Naive thymus-derived CD4-positive, alpha-beta T cell (primary cell): ENCODE measurements at regions of chrX and their contacts with region 1.

Region 1: DNA sequence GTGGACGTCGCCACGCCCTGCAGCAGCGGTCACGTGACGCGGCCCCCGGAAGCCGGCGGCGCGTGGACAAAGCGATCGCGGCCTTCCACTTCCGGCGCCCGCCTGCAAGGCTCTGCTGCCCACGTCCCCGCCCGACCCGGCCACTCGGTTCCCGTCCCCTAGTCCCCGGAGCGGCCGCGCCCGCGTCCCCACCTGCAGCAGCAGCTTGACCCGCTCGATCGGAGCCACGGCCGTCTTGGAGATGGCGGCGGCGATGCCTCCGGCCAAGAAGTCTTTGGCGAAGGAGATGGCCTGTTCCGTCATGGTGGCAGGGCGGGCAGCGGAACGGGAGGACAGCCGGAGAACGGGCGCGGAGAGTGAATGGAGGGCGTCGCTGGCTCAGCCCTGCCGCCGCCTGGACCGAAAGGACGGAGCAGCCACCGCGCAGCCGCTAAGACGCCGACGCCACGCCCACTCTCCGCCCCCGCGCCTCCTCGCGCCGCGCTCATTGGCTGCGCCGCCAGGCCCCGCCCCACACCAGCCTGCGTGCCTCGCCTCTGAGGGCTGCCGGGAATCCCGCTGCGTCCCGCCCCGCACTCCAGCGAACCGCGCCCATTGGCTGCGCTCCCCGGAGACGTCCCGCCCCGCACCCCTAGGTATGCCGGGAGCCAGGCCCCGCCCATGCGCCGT is at the start of gene SLC25A6:
- DNase-seq: peak; percentile 97 to 100 (median 100)
- ATAC-seq: peak; percentile 96
- H3K4me3 ChIP-seq: peak within 1 kb of the TSS; percentile 94
- H3K4me3 Mint-ChIP-seq: peak within 1 kb of the TSS; percentile 78 to 95 (median 92)
- H3K27ac ChIP-seq: peak within 1 kb of the TSS; percentile 97
- H3K27ac Mint-ChIP-seq: peak within 1 kb of the TSS; percentile 84 to 98 (median 91)
- H3K4me1 ChIP-seq: peaks cover 25 to 33% of the 10 kb centered on the region in 2 donors
- H3K4me1 Mint-ChIP-seq: peaks cover 35 to 71% (median 52%) of the 10 kb centered on the region in 7 donors
- H3K27me3 ChIP-seq: no peaks in the 10 kb centered on the region
- H3K27me3 Mint-ChIP-seq: no peaks in the 10 kb centered on the region
- total RNA-seq, gene SLC25A6: 238 to 341 (median 270) TPM

Region 2: DNA sequence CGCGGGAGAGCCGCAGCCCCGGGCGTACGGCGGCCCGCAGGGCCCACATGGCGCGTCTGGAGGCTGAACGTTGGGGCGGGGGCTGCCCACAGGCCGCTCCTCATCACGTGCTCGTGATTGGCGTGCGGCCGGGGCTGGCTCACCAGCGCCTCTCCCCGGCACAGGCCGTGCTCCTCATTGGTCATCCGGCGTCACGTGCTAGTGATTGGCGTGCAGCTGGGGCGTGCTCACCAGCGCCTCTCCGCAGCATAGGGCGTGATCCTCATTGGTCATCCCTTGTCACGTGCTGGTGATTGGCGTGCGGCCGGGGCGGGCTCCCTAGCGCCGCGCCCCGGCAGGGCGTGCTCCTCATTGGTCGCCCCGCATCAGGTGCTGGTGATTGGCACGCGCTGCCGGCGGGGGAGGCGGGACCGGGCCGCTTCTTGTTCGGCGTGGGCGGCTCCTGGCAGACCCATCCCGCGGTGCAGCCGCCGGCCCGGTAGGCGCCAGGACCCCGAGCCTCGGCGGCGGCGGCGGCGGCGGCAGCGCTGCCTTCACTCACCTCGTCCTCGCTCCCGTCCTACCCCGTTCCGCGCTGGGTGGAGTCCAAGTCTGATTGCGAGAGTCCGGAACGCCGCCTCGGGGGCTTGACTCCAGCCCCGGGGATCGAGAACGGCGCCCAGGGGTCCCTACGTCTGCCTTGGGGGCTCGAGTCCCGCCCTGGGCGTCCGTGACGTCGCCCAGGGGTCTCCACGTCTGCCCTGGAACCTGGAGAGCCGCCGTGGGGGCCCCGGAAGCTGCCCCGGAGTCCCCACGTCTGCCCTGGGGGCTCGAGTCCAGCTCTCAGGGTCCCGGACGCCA is 1072.9 kb before region 1 on chrX and contains the start of gene GTPBP6:
- CTCF ChIA-PET with region 1: no interaction called
- POLR2A ChIA-PET with region 1: no interaction called
- intact Hi-C with region 1: loop called (anchors 1 to 5 kb)
- DNase-seq: peak; percentile 93 to 100 (median 99)
- ATAC-seq: peak; percentile 80
- H3K4me3 ChIP-seq: peak within 1 kb of the TSS; percentile 70
- H3K4me3 Mint-ChIP-seq: peak within 1 kb of the TSS in 9 of 10 donors; percentile 85 to 98 (median 92)
- H3K27ac ChIP-seq: peak within 1 kb of the TSS; percentile 95
- H3K27ac Mint-ChIP-seq: peak within 1 kb of the TSS; percentile 93 to 100 (median 98)
- H3K4me1 ChIP-seq: peaks cover 15 to 16% of the 10 kb centered on the region in 2 donors
- H3K4me1 Mint-ChIP-seq: peaks cover 8 to 34% (median 25%) of the 10 kb centered on the region in 7 donors
- H3K27me3 ChIP-seq: no peaks in the 10 kb centered on the region
- H3K27me3 Mint-ChIP-seq: peaks cover 0 to 3% (median 0%) of the 10 kb centered on the region in 5 donors
- total RNA-seq, gene GTPBP6: 52.1 to 95.2 (median 75.1) TPM

Region 3: DNA sequence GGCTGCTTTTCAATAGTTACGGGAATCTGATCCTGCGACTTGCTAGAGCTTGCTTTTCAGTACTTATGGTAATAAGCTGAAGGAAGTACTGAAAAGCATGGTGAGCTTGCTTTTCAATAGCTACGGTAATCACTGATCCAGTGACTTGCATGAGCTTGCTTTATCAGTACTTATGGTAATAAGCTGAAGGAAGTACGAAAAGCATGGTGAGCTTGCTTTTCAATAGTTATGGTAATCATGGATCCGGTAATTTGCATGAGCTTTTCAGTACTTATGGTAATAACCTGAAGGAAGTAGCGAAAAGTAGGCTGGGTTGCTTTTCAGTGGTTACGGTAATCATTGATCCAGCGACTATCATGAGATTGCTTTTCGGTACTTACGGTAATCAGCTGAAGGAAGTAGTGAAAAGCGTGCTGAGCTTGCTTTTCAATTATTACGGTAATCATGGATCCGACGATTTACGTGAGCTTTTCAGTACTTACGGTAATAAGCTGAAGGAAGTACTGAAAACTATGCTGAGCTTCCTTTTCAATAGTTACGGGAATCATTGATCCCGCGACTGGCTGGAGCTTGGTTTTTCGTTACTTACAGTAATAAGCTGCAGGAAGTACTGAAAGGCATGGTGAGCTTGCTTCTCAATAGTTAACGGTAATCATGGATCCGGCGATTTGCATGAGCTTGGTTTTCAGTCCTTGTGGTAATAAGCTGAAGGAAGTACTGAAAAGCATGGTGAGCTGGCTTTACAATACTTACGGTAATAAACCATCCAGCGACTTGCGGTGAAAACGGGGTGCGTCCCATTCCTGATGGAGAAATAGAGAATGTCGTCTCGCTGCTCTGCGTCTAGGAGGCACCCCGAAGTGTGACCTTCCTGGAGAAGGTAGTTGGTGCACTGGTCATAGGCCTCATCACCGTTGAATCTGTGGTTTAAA is 185.9 kb before region 1 on chrX:
- CTCF ChIA-PET with region 1: no interaction called
- POLR2A ChIA-PET with region 1: no interaction called
- intact Hi-C with region 1: loop called (anchors 1 to 5 kb)
- DNase-seq: peak; percentile 14 to 77 (median 69)
- ATAC-seq: peak; percentile 70
- H3K4me3 ChIP-seq: peak overlapping the region; percentile 56
- H3K4me3 Mint-ChIP-seq: peak overlapping the region; percentile 76 to 87 (median 83)
- H3K27ac ChIP-seq: no peak overlapping the region
- H3K27ac Mint-ChIP-seq: peak overlapping the region in 7 of 9 donors; percentile 22 to 68 (median 36)
- H3K4me1 ChIP-seq: peaks cover 6 to 11% of the 10 kb centered on the region in 2 donors
- H3K4me1 Mint-ChIP-seq: peaks cover 15 to 42% (median 32%) of the 10 kb centered on the region in 7 donors
- H3K27me3 ChIP-seq: no peaks in the 10 kb centered on the region
- H3K27me3 Mint-ChIP-seq: no peaks in the 10 kb centered on the region

Region 4: DNA sequence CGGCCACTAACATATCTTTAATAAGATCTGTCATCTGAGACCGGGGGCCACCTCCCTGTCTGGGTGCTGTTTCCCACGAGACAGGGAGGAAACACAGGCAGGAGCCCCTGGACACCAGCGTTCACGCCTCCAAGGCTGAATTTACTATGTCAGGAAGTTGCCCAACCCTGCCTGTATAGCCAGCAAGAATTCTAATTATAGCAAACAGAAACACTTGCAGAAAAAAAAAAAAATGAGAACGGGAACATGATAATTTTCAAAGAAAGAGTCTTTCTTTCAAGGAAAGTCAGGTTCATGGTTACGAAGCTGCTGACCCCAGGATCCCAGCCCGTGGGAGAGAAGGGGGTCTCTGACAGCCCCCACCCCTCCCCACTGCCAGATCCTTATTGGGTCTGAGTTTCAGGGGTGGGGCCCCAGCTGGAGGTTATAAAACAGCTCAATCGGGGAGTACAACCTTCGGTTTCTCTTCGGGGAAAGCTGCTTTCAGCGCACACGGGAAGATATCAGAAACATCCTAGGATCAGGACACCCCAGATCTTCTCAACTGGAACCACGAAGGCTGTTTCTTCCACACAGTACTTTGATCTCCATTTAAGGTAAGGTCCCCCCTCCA is 55.4 kb before region 1 on chrX and contains the start of gene IL3RA:
- CTCF ChIA-PET with region 1: no interaction called
- POLR2A ChIA-PET with region 1: no interaction called
- intact Hi-C with region 1: loop called in 1 of 2 experiments (anchors 5 kb)
- DNase-seq: peak in 4 of 9 donors; percentile 7 to 14 (median 12)
- ATAC-seq: peak; percentile 79
- H3K4me3 ChIP-seq: peak within 1 kb of the TSS; percentile 38
- H3K4me3 Mint-ChIP-seq: peak within 1 kb of the TSS; percentile 77 to 97 (median 84)
- H3K27ac ChIP-seq: no peak within 1 kb of the TSS
- H3K27ac Mint-ChIP-seq: peak within 1 kb of the TSS in 8 of 9 donors; percentile 0 to 89 (median 42)
- H3K4me1 ChIP-seq: no peaks in the 10 kb centered on the region
- H3K4me1 Mint-ChIP-seq: peaks cover 6 to 32% (median 9%) of the 10 kb centered on the region in 7 donors
- H3K27me3 ChIP-seq: no peaks in the 10 kb centered on the region
- H3K27me3 Mint-ChIP-seq: peaks cover 0 to 4% (median 3%) of the 10 kb centered on the region in 5 donors
- total RNA-seq, gene IL3RA: 7.9 to 23.7 (median 10.5) TPM in 3 of 5 experiments, not detected in the others

Region 5: DNA sequence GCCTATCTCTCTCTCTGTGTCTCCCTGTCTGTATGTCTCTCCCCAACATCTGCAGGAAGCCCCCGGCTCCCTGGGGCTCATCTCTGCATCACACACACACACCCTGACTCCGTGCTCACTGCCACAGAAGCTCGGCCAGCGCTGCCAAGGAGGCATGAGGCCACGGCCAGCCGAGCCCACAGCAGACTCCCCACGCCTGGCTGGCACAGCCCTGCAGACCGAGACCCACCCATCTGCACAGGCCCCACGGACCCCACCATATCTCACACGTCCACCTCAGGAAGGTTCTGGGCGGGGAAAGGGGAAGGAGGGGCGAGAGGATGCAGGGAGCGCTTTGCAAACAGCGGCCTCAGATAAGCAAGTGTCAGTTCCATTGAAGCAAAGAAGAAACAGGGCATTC is 28.5 kb after region 1 on chrX:
- CTCF ChIA-PET with region 1: no interaction called
- POLR2A ChIA-PET with region 1: no interaction called
- intact Hi-C with region 1: no loop called
- DNase-seq: no peak
- ATAC-seq: no peak
- H3K4me3 ChIP-seq: no peak overlapping the region
- H3K4me3 Mint-ChIP-seq: no peak overlapping the region
- H3K27ac ChIP-seq: no peak overlapping the region
- H3K27ac Mint-ChIP-seq: peak overlapping the region in 5 of 9 donors; percentile 15 to 72 (median 65)
- H3K4me1 ChIP-seq: no peaks in the 10 kb centered on the region
- H3K4me1 Mint-ChIP-seq: peaks cover 0 to 11% (median 8%) of the 10 kb centered on the region in 7 donors
- H3K27me3 ChIP-seq: no peaks in the 10 kb centered on the region
- H3K27me3 Mint-ChIP-seq: no peaks in the 10 kb centered on the region

Region 6: DNA sequence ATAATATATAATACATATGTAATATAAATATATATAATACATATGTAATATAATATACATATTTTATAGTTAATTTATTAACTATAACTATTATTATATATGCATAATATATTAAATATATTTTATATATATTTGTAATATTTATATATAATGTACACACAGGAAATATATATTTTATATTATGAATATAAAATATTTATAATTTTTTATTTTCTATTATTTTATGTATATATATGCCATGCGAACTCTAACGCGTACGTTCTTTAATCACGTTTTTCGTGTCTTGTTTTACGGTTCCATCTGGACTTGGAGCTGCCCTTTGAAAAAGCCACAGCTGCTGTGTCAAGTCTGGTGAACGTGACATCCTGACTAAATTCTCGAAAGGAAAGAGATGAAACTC is 555.1 kb after region 1 on chrX:
- CTCF ChIA-PET with region 1: no interaction called
- POLR2A ChIA-PET with region 1: no interaction called
- intact Hi-C with region 1: no loop called
- DNase-seq: no peak
- ATAC-seq: no peak
- H3K4me3 ChIP-seq: no peak overlapping the region
- H3K4me3 Mint-ChIP-seq: no peak overlapping the region
- H3K27ac ChIP-seq: no peak overlapping the region
- H3K27ac Mint-ChIP-seq: no peak overlapping the region
- H3K4me1 ChIP-seq: no peaks in the 10 kb centered on the region
- H3K4me1 Mint-ChIP-seq: no peaks in the 10 kb centered on the region
- H3K27me3 ChIP-seq: no peaks in the 10 kb centered on the region
- H3K27me3 Mint-ChIP-seq: no peaks in the 10 kb centered on the region

Region 7: GRCh38 chrX:2608638-2609430 is 1217.0 kb after region 1 on chrX:
- CTCF ChIA-PET with region 1: no interaction called
- POLR2A ChIA-PET with region 1: no interaction called
- intact Hi-C with region 1: loop called (anchors 1 kb)
- DNase-seq: peak; percentile 69 to 89 (median 79)
- ATAC-seq: peak; percentile 99
- H3K4me3 ChIP-seq: peak overlapping the region; percentile 89
- H3K4me3 Mint-ChIP-seq: peak overlapping the region; percentile 90 to 96 (median 93)
- H3K27ac ChIP-seq: peak overlapping the region; percentile 71
- H3K27ac Mint-ChIP-seq: peak overlapping the region; percentile 51 to 93 (median 86)
- H3K4me1 ChIP-seq: peaks cover 9 to 17% of the 10 kb centered on the region in 2 donors
- H3K4me1 Mint-ChIP-seq: peaks cover 39 to 72% (median 56%) of the 10 kb centered on the region in 7 donors
- H3K27me3 ChIP-seq: no peaks in the 10 kb centered on the region
- H3K27me3 Mint-ChIP-seq: no peaks in the 10 kb centered on the region

Region 8: DNA sequence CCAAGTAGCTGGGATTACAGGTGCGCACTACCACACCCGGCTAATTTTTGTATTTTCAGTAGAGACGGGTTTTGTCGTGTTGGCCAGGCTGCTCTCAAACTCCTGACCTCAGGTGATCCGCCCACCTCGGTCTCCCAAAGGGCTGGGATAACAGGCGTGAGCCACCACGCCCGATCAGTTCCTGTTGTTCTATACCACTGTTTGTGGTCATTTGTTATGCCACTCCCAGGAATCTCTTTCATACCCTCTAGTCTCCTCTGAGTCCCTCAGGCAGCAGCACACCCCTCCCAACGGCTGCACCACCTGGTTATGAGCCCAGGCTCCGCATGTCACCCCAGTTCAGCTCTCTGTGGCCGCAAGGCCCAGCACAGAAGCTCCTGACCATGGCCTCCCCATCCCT is 1281.8 kb after region 1 on chrX:
- CTCF ChIA-PET with region 1: no interaction called
- POLR2A ChIA-PET with region 1: no interaction called
- intact Hi-C with region 1: no loop called
- DNase-seq: no peak
- ATAC-seq: no peak
- H3K4me3 ChIP-seq: no peak overlapping the region
- H3K4me3 Mint-ChIP-seq: no peak overlapping the region
- H3K27ac ChIP-seq: no peak overlapping the region
- H3K27ac Mint-ChIP-seq: no peak overlapping the region
- H3K4me1 ChIP-seq: no peaks in the 10 kb centered on the region
- H3K4me1 Mint-ChIP-seq: peaks cover 0 to 4% (median 0%) of the 10 kb centered on the region in 7 donors
- H3K27me3 ChIP-seq: no peaks in the 10 kb centered on the region
- H3K27me3 Mint-ChIP-seq: peaks cover 0 to 13% (median 0%) of the 10 kb centered on the region in 5 donors

Region 9: DNA sequence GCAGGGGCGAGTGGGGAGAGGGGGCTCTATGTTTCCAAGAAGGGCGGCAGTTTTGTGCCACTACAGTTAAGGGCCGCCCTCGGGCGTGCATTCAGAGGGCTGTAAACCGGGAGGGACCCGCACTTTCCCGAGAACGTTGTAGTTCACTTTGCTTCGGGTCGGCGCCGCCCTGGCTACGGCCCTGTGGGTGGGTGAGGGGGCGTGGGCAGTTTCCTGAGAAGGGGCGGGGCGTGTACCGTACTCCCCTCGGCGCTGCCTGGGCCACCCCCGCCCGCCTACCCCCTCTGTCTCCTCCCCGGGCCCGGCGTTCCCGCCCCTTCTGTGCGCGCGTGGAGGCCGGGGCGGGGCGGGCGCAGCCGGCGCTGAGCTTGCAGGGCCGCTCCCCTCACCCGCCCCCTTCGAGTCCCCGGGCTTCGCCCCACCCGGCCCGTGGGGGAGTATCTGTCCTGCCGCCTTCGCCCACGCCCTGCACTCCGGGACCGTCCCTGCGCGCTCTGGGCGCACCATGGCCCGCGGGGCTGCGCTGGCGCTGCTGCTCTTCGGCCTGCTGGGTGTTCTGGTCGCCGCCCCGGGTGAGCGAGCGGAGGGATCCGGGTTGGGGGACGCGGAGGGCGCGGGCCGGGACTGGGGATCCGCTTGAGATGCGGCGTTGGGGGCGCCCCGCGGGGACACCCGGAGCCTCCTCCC is 1299.2 kb after region 1 on chrX and contains the start of gene CD99:
- CTCF ChIA-PET with region 1: no interaction called
- POLR2A ChIA-PET with region 1: no interaction called
- intact Hi-C with region 1: loop called in 1 of 2 experiments (anchors 1 kb)
- DNase-seq: peak; percentile 81 to 93 (median 85)
- ATAC-seq: peak; percentile 96
- H3K4me3 ChIP-seq: peak within 1 kb of the TSS; percentile 91
- H3K4me3 Mint-ChIP-seq: peak within 1 kb of the TSS; percentile 87 to 98 (median 95)
- H3K27ac ChIP-seq: peak within 1 kb of the TSS; percentile 83
- H3K27ac Mint-ChIP-seq: peak within 1 kb of the TSS; percentile 80 to 95 (median 91)
- H3K4me1 ChIP-seq: peaks cover 31 to 33% of the 10 kb centered on the region in 2 donors
- H3K4me1 Mint-ChIP-seq: peaks cover 36 to 42% (median 39%) of the 10 kb centered on the region in 7 donors
- H3K27me3 ChIP-seq: no peaks in the 10 kb centered on the region
- H3K27me3 Mint-ChIP-seq: peaks cover 0 to 11% (median 0%) of the 10 kb centered on the region in 5 donors
- total RNA-seq, gene CD99: 112 to 293 (median 181) TPM